ENCODE measurements at regions of chr10 and their contacts with region 1.

Region 1: GRCh38 chr10:61164458-61165160 is 220.6 kb upstream of the RHOBTB1 start:
- DNase-seq: peak; percentile 44 to 76
- ATAC-seq: peak; percentile 82 to 86 (median 86)
- H3K4me3 ChIP-seq: no peak overlapping the region
- H3K27ac ChIP-seq: peak overlapping the region; percentile 89
- H3K4me1 ChIP-seq: peaks cover 30% of the 10 kb centered on the region
- H3K27me3 ChIP-seq: no peaks in the 10 kb centered on the region
- CTCF ChIP-seq: no peak

Region 2: DNA sequence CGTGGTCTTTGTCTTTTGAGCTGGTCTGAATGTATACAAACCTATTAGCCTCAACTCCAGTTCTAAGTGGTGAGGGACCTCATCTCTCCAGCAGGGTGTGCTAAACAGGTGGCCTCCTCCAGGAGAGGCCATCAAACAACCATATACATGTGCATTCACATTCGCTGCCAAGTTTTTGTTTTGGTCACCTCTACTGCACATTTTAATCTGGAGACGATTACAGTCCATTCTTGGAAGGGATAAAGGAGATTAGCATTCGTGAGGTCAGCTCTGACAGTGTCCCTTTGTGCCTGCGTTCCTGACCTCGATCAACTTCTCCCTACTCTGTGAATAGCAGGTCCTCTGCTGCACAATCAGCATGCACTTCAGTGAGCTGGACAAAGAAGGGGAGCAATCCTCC is 281.4 kb before region 1 on chr10:
- intact Hi-C with region 1: loop called in 1 of 2 experiments (anchors 10 kb)
- DNase-seq: no peak
- ATAC-seq: peak in 2 of 4 donors; percentile 44 to 51
- H3K4me3 ChIP-seq: no peak overlapping the region
- H3K27ac ChIP-seq: peak overlapping the region; percentile 66
- H3K4me1 ChIP-seq: peaks cover 41% of the 10 kb centered on the region
- H3K27me3 ChIP-seq: no peaks in the 10 kb centered on the region
- CTCF ChIP-seq: peak; percentile 34

Region 3: DNA sequence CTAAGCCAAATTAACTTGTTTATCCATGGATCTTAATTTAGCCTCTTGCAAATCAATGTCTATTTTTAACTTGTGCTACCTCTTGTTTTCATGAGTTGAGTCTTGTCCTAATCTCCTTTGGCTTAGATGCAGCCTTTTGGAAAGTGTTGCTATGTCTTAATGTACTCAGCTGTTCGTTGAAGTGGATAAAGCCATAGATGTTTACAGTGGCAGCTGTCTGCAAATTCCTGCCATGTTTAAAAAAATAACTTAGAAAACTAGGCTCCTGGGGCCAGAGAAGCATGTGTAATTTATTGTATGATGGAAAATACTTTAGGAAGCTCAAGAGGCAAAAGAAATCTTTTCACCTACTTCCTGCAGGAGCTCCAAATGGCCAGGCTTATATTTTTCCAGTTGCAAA is 32.4 kb after region 1 on chr10:
- intact Hi-C with region 1: loop called in 1 of 2 experiments (anchors 5 kb)
- DNase-seq: no peak
- ATAC-seq: peak in 3 of 4 donors; percentile 76 to 92 (median 84)
- H3K4me3 ChIP-seq: no peak overlapping the region
- H3K27ac ChIP-seq: peak overlapping the region; percentile 64
- H3K4me1 ChIP-seq: peaks cover 13% of the 10 kb centered on the region
- H3K27me3 ChIP-seq: no peaks in the 10 kb centered on the region
- CTCF ChIP-seq: no peak